HepG2 (cell line): ENCODE measurements at regions of chr5 and their contacts with region 1.

Region 1: GRCh38 chr5:95846554-95847260 is 24.2 kb upstream of the GLRX start:
- DNase-seq: peak; percentile 63
- ATAC-seq: peak; percentile 69
- H3K4me3 ChIP-seq: no peak overlapping the region
- H3K27ac ChIP-seq: no peak overlapping the region
- H3K4me1 ChIP-seq: peaks cover 45% of the 10 kb centered on the region
- H3K27me3 ChIP-seq: no peaks in the 10 kb centered on the region
- CTCF ChIP-seq: peak; percentile 92
- EP300 ChIP-seq: no peak
- POLR2A ChIP-seq: no peak
- RAD21 ChIP-seq: peak; percentile 84

Region 2: DNA sequence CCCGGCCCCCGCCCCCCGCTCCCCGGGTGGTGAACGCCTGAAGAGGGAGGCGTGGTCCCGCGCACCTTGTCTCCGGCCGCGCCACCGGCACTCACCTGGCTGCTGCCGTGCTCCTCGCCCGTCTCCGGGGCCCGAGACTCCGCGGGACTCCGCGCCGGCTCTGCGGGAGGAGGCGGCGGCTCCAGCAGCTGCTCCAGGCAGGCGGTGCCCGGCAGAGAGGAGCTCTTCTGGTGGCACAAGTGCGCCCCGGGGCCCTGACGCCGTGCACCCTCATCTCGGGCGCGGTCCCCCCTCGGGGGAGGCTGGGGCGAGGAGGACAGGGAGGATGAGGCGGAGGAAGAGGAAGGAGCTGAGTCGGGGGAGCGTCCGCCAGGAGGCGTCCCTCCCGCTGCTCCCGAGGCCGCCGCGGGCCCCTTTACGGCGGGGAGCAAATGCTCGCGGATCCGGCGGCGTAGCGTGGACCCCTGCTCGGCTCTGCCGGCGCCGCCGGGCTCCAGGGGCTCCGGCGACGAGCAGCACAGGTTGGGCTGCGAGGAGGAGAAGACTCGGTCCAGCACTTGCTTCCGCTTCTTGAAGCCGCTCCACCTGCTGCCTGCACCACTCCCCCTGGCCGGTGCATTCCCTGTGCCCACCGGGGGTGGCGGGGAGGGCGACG is 562.8 kb before region 1 on chr5:
- CTCF ChIA-PET with region 1: no interaction called
- POLR2A ChIA-PET with region 1: no interaction called
- in situ Hi-C with region 1: loop called (anchors 25 kb)
- intact Hi-C with region 1: no loop called
- DNase-seq: no peak
- ATAC-seq: peak; percentile 82
- H3K4me3 ChIP-seq: peak overlapping the region; percentile 47 to 74 (median 59); a peak in 5 of 6 replicates
- H3K27ac ChIP-seq: no peak overlapping the region
- H3K4me1 ChIP-seq: peaks cover 7% of the 10 kb centered on the region; the same call in 1 of the 2 replicates
- H3K27me3 ChIP-seq: peaks cover 2 to 39% of the 10 kb centered on the region in 2 experiments
- CTCF ChIP-seq: peak; percentile 74
- EP300 ChIP-seq: no peak
- POLR2A ChIP-seq: no peak
- RAD21 ChIP-seq: peak; percentile 42; the same call in 1 of the 2 replicates

Region 3: GRCh38 chr5:95646554-95647431 is 199.9 kb before region 1 on chr5 and contains the start of gene RFESD:
- CTCF ChIA-PET with region 1: interaction called, 11 read pairs
- POLR2A ChIA-PET with region 1: interaction called, 6 read pairs
- in situ Hi-C with region 1: loop called (anchors 5 kb)
- intact Hi-C with region 1: loop called (anchors 1 kb)
- DNase-seq: peak; percentile 96
- ATAC-seq: peak; percentile 98
- H3K4me3 ChIP-seq: peak within 1 kb of the TSS; percentile 31 to 55 (median 39); a peak in 5 of 6 replicates
- H3K27ac ChIP-seq: peak within 1 kb of the TSS; percentile 90
- H3K4me1 ChIP-seq: peaks cover 55% of the 10 kb centered on the region
- H3K27me3 ChIP-seq: no peaks in the 10 kb centered on the region
- CTCF ChIP-seq: peak; percentile 56
- EP300 ChIP-seq: peak; percentile 18 to 53; a peak in 2 of 4 replicates
- POLR2A ChIP-seq: peak; percentile 65 to 85
- RAD21 ChIP-seq: peak; percentile 32; the same call in 1 of the 2 replicates
- total RNA-seq, gene RFESD: 1.2 and 2.2 TPM in 2 replicates

Region 4: GRCh38 chr5:95781101-95781583 is 65.6 kb before region 1 on chr5:
- CTCF ChIA-PET with region 1: interaction called, 73 read pairs
- POLR2A ChIA-PET with region 1: interaction called, 4 read pairs
- in situ Hi-C with region 1: loop called (anchors 5 kb)
- intact Hi-C with region 1: loop called (anchors 1 kb)
- DNase-seq: peak; percentile 73
- ATAC-seq: peak; percentile 100
- H3K4me3 ChIP-seq: no peak overlapping the region
- H3K27ac ChIP-seq: no peak overlapping the region
- H3K4me1 ChIP-seq: peaks cover 6% of the 10 kb centered on the region; the same call in 1 of the 2 replicates
- H3K27me3 ChIP-seq: no peaks in the 10 kb centered on the region
- CTCF ChIP-seq: peak; percentile 89
- EP300 ChIP-seq: no peak
- POLR2A ChIP-seq: no peak
- RAD21 ChIP-seq: peak; percentile 94

Region 5: GRCh38 chr5:95808686-95809413 is 37.9 kb before region 1 on chr5:
- CTCF ChIA-PET with region 1: no interaction called
- POLR2A ChIA-PET with region 1: interaction called, 3 read pairs
- in situ Hi-C with region 1: no loop called
- intact Hi-C with region 1: loop called (anchors 5 kb)
- DNase-seq: no peak
- ATAC-seq: no peak
- H3K4me3 ChIP-seq: no peak overlapping the region
- H3K27ac ChIP-seq: no peak overlapping the region
- H3K4me1 ChIP-seq: peaks cover 65% of the 10 kb centered on the region
- H3K27me3 ChIP-seq: no peaks in the 10 kb centered on the region
- CTCF ChIP-seq: no peak
- EP300 ChIP-seq: no peak
- POLR2A ChIP-seq: no peak
- RAD21 ChIP-seq: no peak

Region 6: GRCh38 chr5:95835682-95836385 is 10.9 kb before region 1 on chr5:
- CTCF ChIA-PET with region 1: interaction called, 11 read pairs
- POLR2A ChIA-PET with region 1: interaction called, 5 read pairs
- in situ Hi-C with region 1: no loop called
- intact Hi-C with region 1: loop called (anchors 1 kb)
- DNase-seq: no peak
- ATAC-seq: no peak
- H3K4me3 ChIP-seq: peak overlapping the region in 1 of 3 experiments; percentile 69; a peak in 1 of 6 replicates
- H3K27ac ChIP-seq: no peak overlapping the region
- H3K4me1 ChIP-seq: peaks cover 66% of the 10 kb centered on the region
- H3K27me3 ChIP-seq: no peaks in the 10 kb centered on the region
- CTCF ChIP-seq: no peak
- EP300 ChIP-seq: no peak
- POLR2A ChIP-seq: no peak
- RAD21 ChIP-seq: no peak